ENCODE measurements at regions of chr7 and their contacts with region 1.

Region 1: GRCh38 chr7:100428967-100429636 is 529 bp upstream of the MEPCE start:
- DNase-seq: peak; percentile 100
- H3K4me3 ChIP-seq: peak overlapping the region; percentile 83 to 95
- H3K4me3 Mint-ChIP-seq: peak overlapping the region; percentile 91 to 100 (median 99)
- H3K27ac ChIP-seq: peak overlapping the region; percentile 100
- H3K27ac Mint-ChIP-seq: peak overlapping the region; percentile 99 to 100 (median 100)
- H3K4me1 ChIP-seq: peaks cover 41% of the 10 kb centered on the region
- H3K4me1 Mint-ChIP-seq: peaks cover 18 to 62% (median 36%) of the 10 kb centered on the region in 4 donors
- H3K27me3 ChIP-seq: no peaks in the 10 kb centered on the region
- H3K27me3 Mint-ChIP-seq: peaks cover 0 to 5% of the 10 kb centered on the region in 2 donors

Region 2: GRCh38 chr7:99631295-99632109 is 797.6 kb before region 1 on chr7:
- CTCF ChIA-PET with region 1: no interaction called
- POLR2A ChIA-PET with region 1: no interaction called
- intact Hi-C with region 1: no loop called
- DNase-seq: no peak
- H3K4me3 ChIP-seq: no peak overlapping the region
- H3K4me3 Mint-ChIP-seq: no peak overlapping the region
- H3K27ac ChIP-seq: no peak overlapping the region
- H3K27ac Mint-ChIP-seq: peak overlapping the region in 4 of 7 donors; percentile 56 to 88 (median 64)
- H3K4me1 ChIP-seq: no peaks in the 10 kb centered on the region
- H3K4me1 Mint-ChIP-seq: peaks cover 4 to 9% (median 6%) of the 10 kb centered on the region in 4 donors
- H3K27me3 ChIP-seq: no peaks in the 10 kb centered on the region
- H3K27me3 Mint-ChIP-seq: no peaks in the 10 kb centered on the region

Region 3: GRCh38 chr7:99918959-99919813 is 509.9 kb before region 1 on chr7 and contains the start of gene TRIM4:
- CTCF ChIA-PET with region 1: no interaction called
- POLR2A ChIA-PET with region 1: interaction called, 17 read pairs
- intact Hi-C with region 1: no loop called
- DNase-seq: peak; percentile 89 to 90 (median 89)
- H3K4me3 ChIP-seq: peak within 1 kb of the TSS; percentile 85 to 89
- H3K4me3 Mint-ChIP-seq: peak within 1 kb of the TSS; percentile 95 to 98 (median 96)
- H3K27ac ChIP-seq: peak within 1 kb of the TSS; percentile 94
- H3K27ac Mint-ChIP-seq: peak within 1 kb of the TSS; percentile 95 to 99 (median 98)
- H3K4me1 ChIP-seq: peaks cover 41% of the 10 kb centered on the region
- H3K4me1 Mint-ChIP-seq: peaks cover 37 to 61% (median 48%) of the 10 kb centered on the region in 4 donors
- H3K27me3 ChIP-seq: no peaks in the 10 kb centered on the region
- H3K27me3 Mint-ChIP-seq: no peaks in the 10 kb centered on the region
- total RNA-seq, gene TRIM4: 69.0 to 69.7 TPM

Region 4: GRCh38 chr7:100148559-100149350 is 280.3 kb before region 1 on chr7 and contains the start of gene LAMTOR4:
- CTCF ChIA-PET with region 1: no interaction called
- POLR2A ChIA-PET with region 1: interaction called, 14 read pairs
- intact Hi-C with region 1: loop called (anchors 1 kb)
- DNase-seq: peak; percentile 94 to 99 (median 99)
- H3K4me3 ChIP-seq: peak within 1 kb of the TSS; percentile 83 to 93
- H3K4me3 Mint-ChIP-seq: peak within 1 kb of the TSS; percentile 88 to 99 (median 94)
- H3K27ac ChIP-seq: peak within 1 kb of the TSS; percentile 92
- H3K27ac Mint-ChIP-seq: peak within 1 kb of the TSS; percentile 95 to 99 (median 97)
- H3K4me1 ChIP-seq: peaks cover 45% of the 10 kb centered on the region
- H3K4me1 Mint-ChIP-seq: peaks cover 18 to 45% (median 31%) of the 10 kb centered on the region in 4 donors
- H3K27me3 ChIP-seq: no peaks in the 10 kb centered on the region
- H3K27me3 Mint-ChIP-seq: no peaks in the 10 kb centered on the region
- total RNA-seq, gene LAMTOR4: 178 to 189 TPM

Region 5: GRCh38 chr7:100389437-100390088 is 39.5 kb before region 1 on chr7:
- CTCF ChIA-PET with region 1: no interaction called
- POLR2A ChIA-PET with region 1: no interaction called
- intact Hi-C with region 1: no loop called
- DNase-seq: no peak
- H3K4me3 ChIP-seq: no peak overlapping the region
- H3K4me3 Mint-ChIP-seq: no peak overlapping the region
- H3K27ac ChIP-seq: no peak overlapping the region
- H3K27ac Mint-ChIP-seq: no peak overlapping the region
- H3K4me1 ChIP-seq: no peaks in the 10 kb centered on the region
- H3K4me1 Mint-ChIP-seq: no peaks in the 10 kb centered on the region
- H3K27me3 ChIP-seq: no peaks in the 10 kb centered on the region
- H3K27me3 Mint-ChIP-seq: peaks cover 0 to 12% of the 10 kb centered on the region in 2 donors

Region 6: DNA sequence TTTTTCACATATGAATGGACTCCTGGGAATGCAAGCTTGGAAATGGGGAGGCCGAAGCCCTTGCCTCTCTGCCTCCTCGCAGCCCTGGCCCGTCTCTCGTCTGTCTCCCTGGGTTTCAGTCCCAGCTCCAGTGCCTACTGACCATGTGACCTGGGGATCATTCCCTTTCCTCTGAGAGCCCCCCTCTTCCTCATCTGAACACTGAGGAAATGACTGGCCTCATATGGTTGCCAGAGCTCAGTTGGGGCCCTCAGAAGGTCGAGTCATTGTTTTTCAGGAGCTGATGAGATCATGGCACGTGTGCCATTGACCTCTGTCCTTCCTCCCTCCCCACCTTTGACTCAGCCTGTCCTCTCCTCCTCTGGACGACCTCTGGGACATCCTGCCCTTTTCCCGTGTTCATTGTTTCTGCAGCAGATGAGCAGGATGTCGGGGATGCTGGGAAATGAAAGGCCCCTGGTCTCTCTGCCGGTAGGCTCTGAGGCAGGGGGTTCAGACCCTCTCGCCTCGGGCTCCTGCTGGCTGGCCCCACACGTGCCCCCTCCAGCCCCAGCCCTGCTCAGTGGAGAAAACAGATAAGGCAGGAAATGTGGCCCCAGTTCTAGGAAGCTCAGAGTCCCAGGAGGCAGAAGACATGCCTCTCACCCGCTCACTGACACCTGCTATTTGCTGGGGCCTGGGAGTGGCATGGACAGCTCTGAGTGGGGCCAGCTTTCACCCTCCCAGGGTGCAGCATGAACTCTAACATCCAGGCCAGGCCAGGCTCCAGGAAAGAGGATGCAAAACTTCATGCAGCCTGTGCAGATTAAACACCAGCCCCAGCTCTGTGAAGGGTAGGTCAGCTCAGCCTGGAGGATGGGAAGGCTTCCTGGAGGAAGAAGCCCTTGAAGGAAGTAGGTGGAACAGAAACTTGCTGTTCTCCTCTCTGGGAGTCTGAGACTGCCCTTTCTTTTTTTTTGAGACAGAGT is 15.5 kb after region 1 on chr7:
- CTCF ChIA-PET with region 1: no interaction called
- POLR2A ChIA-PET with region 1: interaction called, 33 read pairs
- intact Hi-C with region 1: no loop called
- DNase-seq: no peak
- H3K4me3 ChIP-seq: no peak overlapping the region
- H3K4me3 Mint-ChIP-seq: no peak overlapping the region
- H3K27ac ChIP-seq: no peak overlapping the region
- H3K27ac Mint-ChIP-seq: peak overlapping the region in 4 of 7 donors; percentile 46 to 52 (median 48)
- H3K4me1 ChIP-seq: peaks cover 13% of the 10 kb centered on the region
- H3K4me1 Mint-ChIP-seq: peaks cover 1 to 16% (median 5%) of the 10 kb centered on the region in 4 donors
- H3K27me3 ChIP-seq: no peaks in the 10 kb centered on the region
- H3K27me3 Mint-ChIP-seq: no peaks in the 10 kb centered on the region

Region 7: DNA sequence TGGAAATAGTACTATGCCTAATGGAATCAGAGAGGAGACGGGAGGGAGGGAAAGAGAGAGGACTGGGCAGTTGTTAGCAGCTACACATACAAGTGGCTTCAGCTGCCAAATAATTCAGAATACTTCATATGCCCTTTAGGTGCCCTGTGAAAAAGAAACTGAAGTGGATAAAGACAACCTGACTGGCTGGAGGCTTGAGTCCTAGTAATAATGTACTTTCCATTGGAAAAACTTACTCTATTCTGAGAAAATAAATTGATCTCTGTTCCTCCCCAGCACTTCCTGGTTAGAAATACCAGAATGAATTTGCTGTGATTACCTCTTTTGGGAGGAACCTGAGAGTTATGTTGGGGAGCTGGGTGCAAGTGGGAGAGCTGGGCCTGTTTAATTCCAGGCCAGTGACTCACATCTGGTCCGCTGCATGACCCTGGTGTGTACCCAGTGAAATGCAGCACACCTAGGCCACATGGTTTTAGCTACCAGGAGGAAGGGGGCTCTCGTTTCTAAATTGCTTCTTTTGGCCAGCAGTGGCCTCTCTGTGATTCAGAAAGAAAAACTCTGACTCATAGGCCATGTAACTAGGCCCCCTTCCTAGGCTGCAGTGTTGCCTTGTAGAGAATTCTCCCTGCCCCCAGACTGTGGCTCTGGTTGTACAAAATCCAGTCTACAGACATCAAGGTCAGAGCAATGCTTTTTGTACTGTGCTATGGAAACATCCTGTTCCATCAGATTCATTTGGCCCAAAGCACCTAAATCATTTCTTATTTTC is 116.4 kb after region 1 on chr7:
- CTCF ChIA-PET with region 1: interaction called, 3 read pairs
- POLR2A ChIA-PET with region 1: interaction called, 22 read pairs
- intact Hi-C with region 1: no loop called
- DNase-seq: peak in 1 of 5 donors; percentile 84
- H3K4me3 ChIP-seq: peak overlapping the region; percentile 25 to 29
- H3K4me3 Mint-ChIP-seq: peak overlapping the region; percentile 69 to 97 (median 88)
- H3K27ac ChIP-seq: peak overlapping the region; percentile 66
- H3K27ac Mint-ChIP-seq: peak overlapping the region; percentile 61 to 98 (median 91)
- H3K4me1 ChIP-seq: peaks cover 99% of the 10 kb centered on the region
- H3K4me1 Mint-ChIP-seq: peaks cover 76 to 100% (median 89%) of the 10 kb centered on the region in 4 donors
- H3K27me3 ChIP-seq: no peaks in the 10 kb centered on the region
- H3K27me3 Mint-ChIP-seq: no peaks in the 10 kb centered on the region

Region 8: GRCh38 chr7:100575746-100576383 is 146.8 kb after region 1 on chr7:
- CTCF ChIA-PET with region 1: no interaction called
- POLR2A ChIA-PET with region 1: no interaction called
- intact Hi-C with region 1: no loop called
- DNase-seq: no peak
- H3K4me3 ChIP-seq: no peak overlapping the region
- H3K4me3 Mint-ChIP-seq: no peak overlapping the region
- H3K27ac ChIP-seq: no peak overlapping the region
- H3K27ac Mint-ChIP-seq: peak overlapping the region in 1 of 7 donors; percentile 13
- H3K4me1 ChIP-seq: peaks cover 10% of the 10 kb centered on the region
- H3K4me1 Mint-ChIP-seq: peaks cover 4 to 28% (median 6%) of the 10 kb centered on the region in 4 donors
- H3K27me3 ChIP-seq: no peaks in the 10 kb centered on the region
- H3K27me3 Mint-ChIP-seq: no peaks in the 10 kb centered on the region

Region 9: DNA sequence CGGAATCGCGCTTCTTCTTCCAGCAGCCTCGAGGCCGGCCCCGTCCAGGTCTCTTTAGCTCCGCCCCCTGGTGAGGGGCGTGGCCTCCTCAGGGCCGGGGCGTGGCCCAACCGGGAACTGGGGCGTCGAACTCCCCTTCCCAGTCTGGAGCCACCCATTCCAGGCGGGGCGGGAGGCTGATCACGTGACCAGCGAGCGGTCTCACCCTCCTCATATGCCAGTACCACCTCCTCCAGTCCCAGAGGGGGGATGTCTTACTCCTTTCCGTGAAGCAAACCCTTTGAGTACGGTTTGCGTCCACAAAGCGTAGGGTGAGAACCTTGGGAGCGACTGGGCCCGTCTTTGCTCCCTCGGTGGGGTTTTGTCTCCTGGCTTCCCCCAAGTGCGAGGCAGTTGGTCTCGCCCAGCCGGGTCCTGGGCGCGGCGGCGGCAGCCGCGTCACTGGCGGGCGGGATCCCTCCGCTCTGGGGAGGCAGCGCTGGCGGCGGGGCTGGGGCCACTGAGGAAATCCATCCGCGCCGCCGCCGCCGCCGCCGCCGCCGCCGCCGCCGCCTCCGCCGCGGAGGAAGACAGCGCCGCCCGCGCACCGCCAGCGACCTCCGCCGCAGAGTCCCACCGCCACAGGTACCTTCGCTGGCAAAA is 244.3 kb after region 1 on chr7 and contains the start of gene GNB2:
- CTCF ChIA-PET with region 1: no interaction called
- POLR2A ChIA-PET with region 1: interaction called, 30 read pairs
- intact Hi-C with region 1: loop called (anchors 1 kb)
- DNase-seq: peak; percentile 97 to 98 (median 97)
- H3K4me3 ChIP-seq: peak within 1 kb of the TSS; percentile 80 to 91
- H3K4me3 Mint-ChIP-seq: peak within 1 kb of the TSS; percentile 94 to 99 (median 96)
- H3K27ac ChIP-seq: peak within 1 kb of the TSS; percentile 92
- H3K27ac Mint-ChIP-seq: peak within 1 kb of the TSS; percentile 96 to 99 (median 97)
- H3K4me1 ChIP-seq: peaks cover 30% of the 10 kb centered on the region
- H3K4me1 Mint-ChIP-seq: peaks cover 3 to 33% (median 14%) of the 10 kb centered on the region in 4 donors
- H3K27me3 ChIP-seq: no peaks in the 10 kb centered on the region
- H3K27me3 Mint-ChIP-seq: peaks cover 0 to 1% of the 10 kb centered on the region in 2 donors
- total RNA-seq, gene GNB2: 138 to 144 TPM

Region 10: DNA sequence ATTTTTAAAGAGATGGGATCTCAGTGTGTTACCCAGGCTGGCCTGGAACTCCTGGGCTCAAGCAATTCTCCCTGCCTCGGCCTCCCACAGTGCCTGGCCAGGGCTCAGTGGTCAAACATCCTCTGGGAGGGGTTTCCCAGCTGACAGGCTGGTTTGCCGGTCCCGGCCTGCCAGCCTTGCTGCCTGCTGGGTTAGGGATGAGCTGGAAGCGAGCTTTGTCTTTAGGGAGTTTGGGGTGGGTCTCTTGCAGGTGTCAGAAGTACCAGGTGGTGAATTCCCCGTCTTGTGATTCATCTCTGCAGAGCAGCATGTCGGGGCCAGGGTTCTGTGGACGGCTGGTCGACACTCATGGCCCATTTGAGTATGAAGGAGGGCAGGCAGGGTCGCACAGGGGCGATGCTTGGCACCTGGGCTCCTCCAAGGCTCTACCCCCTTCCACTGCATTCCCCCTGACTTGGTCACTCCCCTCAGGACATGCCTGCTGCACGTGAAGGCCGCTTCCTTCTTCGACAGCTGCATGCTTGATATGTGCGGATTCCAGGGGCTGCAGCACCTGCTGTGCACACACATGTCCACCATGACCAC is 334.5 kb after region 1 on chr7:
- CTCF ChIA-PET with region 1: no interaction called
- POLR2A ChIA-PET with region 1: no interaction called
- intact Hi-C with region 1: no loop called
- DNase-seq: no peak
- H3K4me3 ChIP-seq: no peak overlapping the region
- H3K4me3 Mint-ChIP-seq: no peak overlapping the region
- H3K27ac ChIP-seq: no peak overlapping the region
- H3K27ac Mint-ChIP-seq: no peak overlapping the region
- H3K4me1 ChIP-seq: no peaks in the 10 kb centered on the region
- H3K4me1 Mint-ChIP-seq: no peaks in the 10 kb centered on the region
- H3K27me3 ChIP-seq: no peaks in the 10 kb centered on the region
- H3K27me3 Mint-ChIP-seq: peaks cover 0 to 5% of the 10 kb centered on the region in 2 donors

Measured in CD4-positive, alpha-beta memory T cell (primary cell).